A673 (cell line): ENCODE measurements at regions of chr20 and their contacts with region 1.

Region 1: GRCh38 chr20:52972190-52972937 is at the start of gene TSHZ2:
- DNase-seq: peak; percentile 77
- H3K4me3 ChIP-seq: peak within 1 kb of the TSS; percentile 63
- H3K27ac ChIP-seq: peak within 1 kb of the TSS; percentile 56
- H3K4me1 ChIP-seq: peaks cover 12% of the 10 kb centered on the region
- H3K27me3 ChIP-seq: no peaks in the 10 kb centered on the region
- CTCF ChIP-seq: no peak
- total RNA-seq, gene TSHZ2: 4.1 and 7.3 TPM in 2 replicates

Region 2: DNA sequence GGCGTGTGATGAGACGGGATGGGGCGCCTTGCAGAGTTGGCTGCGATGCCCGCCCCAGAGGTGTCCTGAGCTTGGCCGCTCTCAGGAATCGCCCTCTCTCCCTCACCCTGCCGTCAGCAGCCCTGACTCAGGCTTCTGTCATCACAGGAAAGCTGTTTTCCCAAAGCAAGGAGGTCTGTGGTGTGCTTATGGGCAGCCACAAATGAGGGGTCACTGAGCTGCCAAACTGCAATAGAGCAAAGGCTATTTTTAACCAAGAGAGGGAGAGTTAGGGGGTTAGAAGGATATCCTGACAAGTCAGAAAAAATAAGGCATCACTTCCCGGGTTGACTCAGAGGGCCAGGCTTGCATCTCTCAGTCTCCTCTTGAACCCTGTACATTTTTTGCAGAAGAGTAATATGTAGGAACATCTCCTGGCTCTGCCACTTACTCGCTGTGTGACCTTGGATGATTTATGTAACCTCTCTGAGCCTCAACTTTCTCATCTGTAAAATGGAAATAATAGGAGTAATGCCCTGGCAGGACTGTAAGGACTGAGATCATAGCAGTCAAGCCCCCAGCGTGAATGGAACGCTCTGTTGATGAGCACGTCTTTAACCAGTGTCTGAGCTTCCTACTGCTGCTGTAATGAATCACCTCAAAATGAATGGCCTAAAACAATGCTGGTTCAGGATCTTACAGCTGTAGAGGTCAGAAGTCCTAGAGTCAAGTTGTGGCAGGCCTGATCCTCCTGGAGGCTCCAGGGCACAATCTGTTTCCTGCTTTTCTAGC is 1611.7 kb before region 1 on chr20:
- CTCF ChIA-PET with region 1: interaction called, 13 read pairs
- POLR2A ChIA-PET with region 1: no interaction called
- intact Hi-C with region 1: no loop called
- DNase-seq: no peak
- H3K4me3 ChIP-seq: no peak overlapping the region
- H3K27ac ChIP-seq: no peak overlapping the region
- H3K4me1 ChIP-seq: no peaks in the 10 kb centered on the region
- H3K27me3 ChIP-seq: no peaks in the 10 kb centered on the region
- CTCF ChIP-seq: no peak

Region 3: GRCh38 chr20:52948491-52948890 is 23.9 kb before region 1 on chr20:
- CTCF ChIA-PET with region 1: no interaction called
- POLR2A ChIA-PET with region 1: no interaction called
- intact Hi-C with region 1: no loop called
- DNase-seq: no peak
- H3K4me3 ChIP-seq: no peak overlapping the region
- H3K27ac ChIP-seq: no peak overlapping the region
- H3K4me1 ChIP-seq: no peaks in the 10 kb centered on the region
- H3K27me3 ChIP-seq: no peaks in the 10 kb centered on the region
- CTCF ChIP-seq: no peak

Region 4: DNA sequence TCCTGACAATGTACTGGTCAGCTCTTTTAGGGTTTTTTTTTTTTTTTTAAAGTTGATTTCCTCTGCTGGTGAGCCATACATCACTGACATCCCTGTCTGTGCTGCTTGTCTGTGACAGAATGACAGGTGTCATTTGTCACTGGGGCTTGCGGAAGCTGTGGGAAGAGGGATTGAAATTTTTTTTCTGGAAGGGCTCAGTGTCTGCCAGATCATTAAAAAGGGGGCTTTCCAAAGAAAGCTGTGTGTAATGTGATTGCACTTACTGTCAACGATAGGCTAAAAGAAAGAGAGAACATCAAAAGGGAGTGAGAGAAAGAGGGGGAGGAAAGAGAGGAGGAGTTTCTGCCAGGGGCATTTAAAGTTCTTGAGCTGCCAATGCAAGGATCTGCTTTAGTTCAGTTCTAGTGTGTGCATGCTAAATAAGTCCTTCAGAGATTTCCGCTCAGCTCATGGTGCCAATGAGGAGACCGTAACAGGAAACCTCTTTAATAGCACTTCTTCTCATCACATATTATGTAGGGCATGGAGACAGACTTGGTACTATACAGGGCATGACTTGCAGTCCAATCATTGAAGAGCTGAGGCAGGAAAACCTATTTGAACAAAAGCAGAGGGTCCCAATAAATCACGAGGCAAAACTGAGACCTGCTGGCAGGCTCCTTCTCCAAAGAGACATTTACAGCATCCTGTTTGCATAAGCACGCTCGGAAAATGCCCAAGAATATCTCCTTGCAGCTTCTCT is 177.0 kb after region 1 on chr20:
- CTCF ChIA-PET with region 1: no interaction called
- POLR2A ChIA-PET with region 1: no interaction called
- intact Hi-C with region 1: loop called (anchors 5 kb)
- DNase-seq: peak; percentile 97
- H3K4me3 ChIP-seq: peak overlapping the region; percentile 18
- H3K27ac ChIP-seq: peak overlapping the region; percentile 79
- H3K4me1 ChIP-seq: peaks cover 42% of the 10 kb centered on the region
- H3K27me3 ChIP-seq: no peaks in the 10 kb centered on the region
- CTCF ChIP-seq: no peak